Gastrocnemius medialis (tissue), 4 donors: ENCODE measurements at regions of chr9 and their contacts with region 1.

Region 1: GRCh38 chr9:97559111-97559514 is 57.6 kb downstream of the TMOD1 start:
- DNase-seq: peak; percentile 35 to 64
- ATAC-seq: peak; percentile 47 to 55
- H3K4me3 ChIP-seq: peak overlapping the region in 1 of 4 donors; percentile 5
- H3K27ac ChIP-seq: peak overlapping the region; percentile 79 to 95 (median 88)
- H3K4me1 ChIP-seq: peaks cover 30 to 54% of the 10 kb centered on the region in 2 donors
- H3K27me3 ChIP-seq: no peaks in the 10 kb centered on the region
- CTCF ChIP-seq: no peak
- POLR2A ChIP-seq: peak in 1 of 2 donors; percentile 62

Region 2: DNA sequence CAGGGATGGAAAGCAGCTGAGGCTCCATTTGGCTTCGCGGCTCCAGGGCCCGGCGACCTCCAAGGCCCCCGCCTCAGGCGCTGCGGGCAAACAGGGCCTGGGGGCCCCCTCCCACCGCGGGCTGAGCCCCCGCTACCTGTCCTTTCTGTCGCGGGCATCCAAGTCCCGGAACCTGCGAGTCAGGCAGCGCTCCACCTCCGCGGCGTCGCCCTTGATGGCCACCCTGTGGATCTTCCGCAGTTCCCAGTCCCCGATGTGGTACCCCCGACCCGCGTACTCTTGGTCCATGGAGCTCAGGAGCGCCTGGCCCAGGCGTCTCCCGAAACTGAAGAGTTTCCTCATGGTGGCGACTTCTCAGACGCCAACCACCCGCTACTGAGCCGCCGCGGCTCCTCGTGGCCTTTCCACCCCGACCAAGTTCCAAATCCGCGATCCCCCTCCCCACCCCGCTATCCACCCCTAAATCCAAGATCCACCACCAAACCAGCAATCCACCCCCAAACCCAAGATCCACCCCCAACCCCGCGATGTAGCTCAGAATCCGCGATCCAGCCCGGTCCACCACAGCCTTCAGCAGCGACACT is 338.1 kb before region 1 on chr9:
- in situ Hi-C with region 1: no loop called
- intact Hi-C with region 1: loop called (anchors 5 kb)
- DNase-seq: no peak
- ATAC-seq: no peak
- H3K4me3 ChIP-seq: peak overlapping the region; percentile 27 to 61 (median 36)
- H3K27ac ChIP-seq: no peak overlapping the region
- H3K4me1 ChIP-seq: peaks cover 0 to 18% of the 10 kb centered on the region in 2 donors
- H3K27me3 ChIP-seq: peaks cover 17 to 50% (median 46%) of the 10 kb centered on the region in 3 donors
- CTCF ChIP-seq: no peak
- POLR2A ChIP-seq: no peak

Region 3: DNA sequence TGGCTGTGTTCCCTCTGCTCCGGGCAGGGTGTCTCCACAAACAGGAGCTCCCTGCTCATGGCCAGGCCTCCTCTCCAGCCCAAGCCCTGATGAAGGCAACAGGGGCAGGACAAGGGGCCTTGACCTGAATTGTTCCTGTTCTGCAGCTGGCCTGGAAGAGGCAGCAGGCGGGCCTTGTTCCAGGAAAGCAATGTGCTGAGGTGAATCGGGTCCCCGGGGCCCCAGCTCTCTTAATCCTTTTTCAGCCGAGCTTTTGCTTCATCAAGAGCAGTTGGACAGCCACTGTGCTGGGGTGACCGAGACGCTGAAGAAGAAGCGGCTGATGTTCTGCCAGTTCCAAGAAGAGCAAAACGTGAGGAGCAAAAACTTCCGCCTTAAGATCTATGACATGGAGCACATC is 210.2 kb before region 1 on chr9:
- in situ Hi-C with region 1: no loop called
- intact Hi-C with region 1: no loop called
- DNase-seq: no peak
- ATAC-seq: no peak
- H3K4me3 ChIP-seq: no peak overlapping the region
- H3K27ac ChIP-seq: no peak overlapping the region
- H3K4me1 ChIP-seq: no peaks in the 10 kb centered on the region
- H3K27me3 ChIP-seq: no peaks in the 10 kb centered on the region
- CTCF ChIP-seq: no peak
- POLR2A ChIP-seq: no peak

Region 4: GRCh38 chr9:97529363-97530076 is 29.6 kb before region 1 on chr9:
- in situ Hi-C with region 1: no loop called
- intact Hi-C with region 1: loop called (anchors 2 kb)
- DNase-seq: peak; percentile 78 to 85
- ATAC-seq: peak; percentile 60 to 70
- H3K4me3 ChIP-seq: no peak overlapping the region
- H3K27ac ChIP-seq: peak overlapping the region; percentile 95 to 98 (median 98)
- H3K4me1 ChIP-seq: peaks cover 93 to 94% of the 10 kb centered on the region in 2 donors
- H3K27me3 ChIP-seq: no peaks in the 10 kb centered on the region
- CTCF ChIP-seq: no peak
- POLR2A ChIP-seq: peak in 1 of 2 donors; percentile 20